ENCODE measurements at regions of chr15 and their contacts with region 1.

Region 1: DNA sequence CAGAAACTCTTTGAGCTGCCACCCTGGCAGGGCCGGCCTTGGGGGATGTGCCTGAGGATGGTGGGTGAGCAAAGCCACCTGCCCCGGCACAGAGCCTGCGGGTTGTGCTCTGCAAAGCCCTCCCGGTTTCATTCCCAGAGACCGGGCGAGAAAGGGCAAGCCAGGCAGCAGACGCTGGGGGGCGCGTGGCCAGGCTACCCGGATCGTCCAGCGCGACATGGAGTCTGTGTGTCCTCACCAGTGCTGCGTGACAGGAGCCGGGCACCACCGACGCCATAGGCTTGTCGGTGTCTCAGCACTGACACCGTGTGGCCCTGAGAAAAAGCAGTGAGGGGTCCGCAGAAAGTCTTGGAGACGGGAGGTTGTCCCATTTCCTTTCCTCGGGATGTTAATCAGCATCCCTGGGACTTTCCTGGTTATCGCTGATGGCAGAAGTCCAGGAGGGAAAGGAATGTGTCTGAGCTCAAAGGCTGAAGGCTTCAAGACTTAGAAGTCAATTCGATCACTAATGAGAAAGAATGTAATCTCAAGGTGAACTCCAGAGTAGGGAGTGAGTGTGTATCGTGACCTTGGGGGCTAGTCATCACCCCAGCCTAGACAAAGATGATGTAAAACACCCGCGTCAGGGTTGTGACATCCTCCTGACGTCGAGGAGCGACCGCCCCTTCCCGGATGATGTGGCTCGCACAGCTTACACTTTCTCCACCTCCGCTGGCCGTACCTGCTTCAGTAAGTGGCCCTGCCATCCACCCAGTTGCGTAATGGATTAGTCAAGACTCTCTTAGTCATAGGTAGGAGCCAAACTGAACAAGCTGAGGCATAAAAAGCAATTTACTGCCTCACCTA is 36.3 kb upstream of the PLA2G4E start:
- DNase-seq: peak; percentile 19 to 56 (median 30)
- ATAC-seq: peak; percentile 81
- H3K4me3 ChIP-seq: peak overlapping the region; percentile 23
- H3K4me3 Mint-ChIP-seq: peak overlapping the region; percentile 39 to 79 (median 60)
- H3K27ac ChIP-seq: no peak overlapping the region
- H3K27ac Mint-ChIP-seq: peak overlapping the region in 4 of 9 donors; percentile 24 to 77 (median 35)
- H3K4me1 ChIP-seq: no peaks in the 10 kb centered on the region
- H3K4me1 Mint-ChIP-seq: peaks cover 3 to 17% (median 10%) of the 10 kb centered on the region in 7 donors
- H3K27me3 ChIP-seq: peaks cover 0 to 12% of the 10 kb centered on the region in 2 donors
- H3K27me3 Mint-ChIP-seq: peaks cover 11 to 59% (median 27%) of the 10 kb centered on the region in 5 donors

Region 2: GRCh38 chr15:41930221-41930866 is 126.8 kb before region 1 on chr15:
- CTCF ChIA-PET with region 1: no interaction called
- POLR2A ChIA-PET with region 1: no interaction called
- intact Hi-C with region 1: loop called in 1 of 2 experiments (anchors 2 kb)
- DNase-seq: no peak
- ATAC-seq: peak; percentile 50
- H3K4me3 ChIP-seq: no peak overlapping the region
- H3K4me3 Mint-ChIP-seq: no peak overlapping the region
- H3K27ac ChIP-seq: no peak overlapping the region
- H3K27ac Mint-ChIP-seq: no peak overlapping the region
- H3K4me1 ChIP-seq: peaks cover 18 to 32% of the 10 kb centered on the region in 2 donors
- H3K4me1 Mint-ChIP-seq: peaks cover 26 to 52% (median 45%) of the 10 kb centered on the region in 7 donors
- H3K27me3 ChIP-seq: no peaks in the 10 kb centered on the region
- H3K27me3 Mint-ChIP-seq: no peaks in the 10 kb centered on the region

Region 3: DNA sequence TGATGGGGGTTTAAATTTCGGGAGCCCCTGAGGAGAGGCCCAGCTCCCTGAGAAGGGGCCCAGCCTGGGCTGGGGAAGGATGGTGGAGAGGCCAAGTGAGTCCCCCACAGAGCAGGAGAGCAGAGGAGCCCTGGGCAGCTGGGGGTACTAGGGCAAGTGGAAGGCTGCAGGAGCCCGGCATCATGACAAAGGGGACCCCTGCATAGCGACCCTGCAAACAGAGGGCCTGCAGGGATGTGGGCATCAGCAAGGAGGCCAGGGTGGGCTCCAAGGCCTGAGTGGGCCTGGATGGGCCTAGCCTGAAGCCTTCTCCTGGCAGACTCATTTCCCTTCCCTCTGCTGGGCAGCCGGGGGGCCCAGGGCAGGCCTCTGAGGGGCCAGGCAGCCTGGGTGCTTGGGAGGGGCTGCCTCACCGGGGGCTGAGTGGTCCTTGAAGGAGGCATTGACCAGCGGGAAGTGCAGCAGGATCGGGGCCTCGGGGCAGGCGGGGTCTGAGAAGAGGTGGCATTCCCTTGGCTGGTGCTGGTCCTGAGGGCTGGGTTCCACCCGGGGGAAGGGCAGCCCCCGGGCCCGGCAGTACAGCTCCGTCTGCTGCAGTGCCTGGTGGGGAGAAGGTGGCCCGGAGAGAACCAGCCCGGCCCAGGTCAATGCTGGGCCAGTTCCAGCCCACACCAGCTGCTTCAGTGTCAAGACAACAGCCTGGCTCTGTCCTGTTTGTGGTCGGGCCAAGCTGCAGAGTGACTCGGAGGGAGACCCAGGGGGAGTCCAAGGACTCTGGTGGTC is 12.5 kb after region 1 on chr15:
- CTCF ChIA-PET with region 1: no interaction called
- POLR2A ChIA-PET with region 1: no interaction called
- intact Hi-C with region 1: no loop called
- DNase-seq: no peak
- ATAC-seq: no peak
- H3K4me3 ChIP-seq: no peak overlapping the region
- H3K4me3 Mint-ChIP-seq: no peak overlapping the region
- H3K27ac ChIP-seq: no peak overlapping the region
- H3K27ac Mint-ChIP-seq: no peak overlapping the region
- H3K4me1 ChIP-seq: no peaks in the 10 kb centered on the region
- H3K4me1 Mint-ChIP-seq: peaks cover 0 to 7% (median 4%) of the 10 kb centered on the region in 7 donors
- H3K27me3 ChIP-seq: no peaks in the 10 kb centered on the region
- H3K27me3 Mint-ChIP-seq: peaks cover 11 to 22% (median 18%) of the 10 kb centered on the region in 5 donors

Region 4: GRCh38 chr15:43791993-43792760 is 1735.0 kb after region 1 on chr15 and contains the start of gene SERF2:
- CTCF ChIA-PET with region 1: no interaction called
- POLR2A ChIA-PET with region 1: no interaction called
- intact Hi-C with region 1: no loop called
- DNase-seq: peak; percentile 92 to 99 (median 97)
- ATAC-seq: peak; percentile 97
- H3K4me3 ChIP-seq: peak within 1 kb of the TSS; percentile 98
- H3K4me3 Mint-ChIP-seq: peak within 1 kb of the TSS; percentile 93 to 98 (median 96)
- H3K27ac ChIP-seq: peak within 1 kb of the TSS; percentile 100
- H3K27ac Mint-ChIP-seq: peak within 1 kb of the TSS; percentile 91 to 99 (median 98)
- H3K4me1 ChIP-seq: peaks cover 9 to 22% of the 10 kb centered on the region in 2 donors
- H3K4me1 Mint-ChIP-seq: peaks cover 33 to 54% (median 48%) of the 10 kb centered on the region in 7 donors
- H3K27me3 ChIP-seq: no peaks in the 10 kb centered on the region
- H3K27me3 Mint-ChIP-seq: peaks cover 0 to 2% (median 0%) of the 10 kb centered on the region in 5 donors
- total RNA-seq, gene SERF2: 358 to 676 (median 553) TPM